ENCODE measurements at regions of chr5 and their contacts with region 1.

Region 1: DNA sequence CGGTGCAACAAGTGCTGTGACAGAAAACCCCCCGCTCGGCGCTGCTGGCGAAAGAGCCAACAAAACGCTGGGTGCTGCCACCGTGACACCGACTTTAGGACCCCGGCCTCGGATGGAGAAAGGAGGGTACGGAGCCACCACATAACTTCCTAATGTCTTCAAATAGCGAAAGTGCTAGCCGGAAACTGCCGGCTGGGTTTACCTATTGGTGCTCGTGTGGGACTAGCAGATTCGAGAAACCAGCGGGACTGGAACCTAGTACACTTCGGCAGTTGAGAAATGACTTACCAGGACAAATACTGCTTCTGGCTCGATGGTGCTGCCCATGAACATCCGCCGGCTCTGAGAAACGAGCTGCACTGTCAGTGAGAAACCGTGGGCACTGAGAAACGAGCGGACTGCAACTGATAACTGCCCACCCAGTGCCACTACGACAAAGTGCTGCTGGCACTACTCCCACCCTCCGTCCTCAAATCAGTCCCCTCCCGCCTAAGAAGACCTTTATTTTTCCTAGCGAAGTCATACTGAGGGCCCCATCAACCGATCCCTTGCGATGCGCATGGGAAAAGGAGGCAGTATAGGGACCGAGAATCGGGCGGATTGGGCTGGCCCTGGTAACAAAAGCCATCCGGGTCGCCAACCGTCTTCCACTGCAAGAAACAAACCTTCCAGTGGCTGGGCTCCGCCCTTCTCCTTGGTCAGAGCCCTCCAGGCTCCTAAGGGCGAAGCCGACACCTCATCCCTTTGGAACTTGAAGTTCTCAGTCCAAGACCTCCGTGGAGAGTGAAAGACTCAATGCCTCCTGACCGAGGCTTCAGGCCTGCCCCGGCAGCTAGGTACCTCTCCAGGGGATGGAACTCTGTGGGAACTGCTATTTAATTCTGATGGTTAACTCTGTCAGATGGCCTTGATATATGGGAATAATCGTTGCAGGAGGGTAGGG is 27.0 kb upstream of the ANXA2R start:
- DNase-seq: peak; percentile 74 to 97 (median 86)

Region 2: GRCh38 chr5:43040287-43041098 is 26.6 kb before region 1 on chr5 and contains the start of gene ANXA2R:
- intact Hi-C with region 1: loop called (anchors 1 kb)
- DNase-seq: peak in 7 of 10 donors; percentile 52 to 94 (median 80)

Region 3: DNA sequence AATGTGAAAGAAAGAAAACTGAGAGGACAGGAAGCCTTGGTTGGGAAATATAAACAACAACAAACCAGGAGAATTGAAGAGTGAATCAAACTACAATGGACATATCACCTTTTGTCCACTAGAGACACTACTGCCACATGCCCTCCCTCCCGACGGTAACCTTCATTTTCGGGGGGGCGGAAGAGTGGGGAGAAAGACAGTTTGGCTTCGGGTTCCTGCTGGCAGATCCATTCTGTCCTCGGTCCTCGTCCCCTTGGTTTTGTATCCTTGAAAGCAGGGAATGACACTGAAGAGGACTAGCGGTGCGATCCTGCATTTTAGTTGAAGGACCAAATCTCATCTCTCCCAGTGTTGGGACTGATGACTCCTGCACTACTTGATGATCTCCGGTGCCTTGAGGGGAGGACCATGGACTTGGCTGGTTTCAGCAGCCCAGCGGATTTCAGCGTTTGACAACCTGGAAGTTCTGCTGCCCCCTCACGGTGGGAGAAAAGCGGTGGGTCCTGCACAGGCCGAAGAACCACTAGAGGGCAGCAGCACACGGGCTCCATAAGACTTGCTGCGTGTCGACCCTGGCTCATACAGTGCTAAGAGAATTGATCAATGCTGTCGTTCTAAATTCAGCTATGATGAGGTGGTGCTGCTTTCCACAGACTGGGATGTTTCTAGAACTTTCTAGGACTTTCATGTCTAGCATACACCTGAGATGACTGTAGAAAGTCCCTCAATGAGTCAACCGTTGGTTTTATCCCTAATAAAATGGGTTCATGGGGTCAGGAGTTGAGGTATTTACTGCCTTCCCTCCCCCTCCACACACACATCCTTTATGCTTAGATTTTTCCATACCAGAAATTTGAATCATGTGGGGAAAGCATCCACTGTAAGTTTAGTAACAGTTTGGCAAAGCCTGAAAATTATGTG is 38.6 kb after region 1 on chr5:
- intact Hi-C with region 1: loop called (anchors 5 kb)
- DNase-seq: peak; percentile 61 to 97 (median 85)

Region 4: GRCh38 chr5:43120720-43121564 is 53.9 kb after region 1 on chr5 and contains the start of gene ZNF131:
- intact Hi-C with region 1: loop called (anchors 5 kb)
- DNase-seq: peak; percentile 90 to 100 (median 95)

Region 5: DNA sequence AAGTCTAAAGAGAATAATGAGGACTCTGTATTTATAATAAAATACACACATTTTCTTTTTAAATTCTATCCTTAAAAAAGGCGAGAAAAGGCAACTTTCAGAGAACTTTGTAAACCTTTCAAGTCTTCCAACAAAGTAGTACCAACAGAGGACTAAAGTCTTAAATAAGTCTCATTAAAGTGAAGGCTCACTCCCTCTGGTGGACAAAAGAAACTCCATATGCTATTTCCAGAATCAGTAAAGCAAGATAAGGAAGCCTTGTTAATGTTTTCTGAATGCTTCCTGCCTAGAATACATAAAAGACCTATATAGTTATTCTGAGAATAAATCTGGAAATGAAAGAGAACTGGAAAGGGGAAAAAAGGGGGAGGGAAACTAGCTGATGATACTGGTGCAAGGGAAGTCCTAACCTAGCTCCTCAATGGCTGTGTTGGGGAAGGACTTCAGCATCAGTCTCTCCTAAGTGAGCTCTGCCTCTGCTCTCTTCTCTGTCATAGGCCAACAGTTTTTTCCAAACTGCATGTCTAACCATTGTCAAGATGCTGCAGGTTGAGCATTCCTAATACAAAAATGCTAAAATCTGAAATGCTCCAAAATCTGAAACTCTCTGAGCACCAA is 239.0 kb after region 1 on chr5:
- intact Hi-C with region 1: loop called (anchors 10 kb)
- DNase-seq: no peak